Endothelial cell of umbilical vein (primary cell): ENCODE measurements at regions of chr9 and their contacts with region 1.

Region 1: DNA sequence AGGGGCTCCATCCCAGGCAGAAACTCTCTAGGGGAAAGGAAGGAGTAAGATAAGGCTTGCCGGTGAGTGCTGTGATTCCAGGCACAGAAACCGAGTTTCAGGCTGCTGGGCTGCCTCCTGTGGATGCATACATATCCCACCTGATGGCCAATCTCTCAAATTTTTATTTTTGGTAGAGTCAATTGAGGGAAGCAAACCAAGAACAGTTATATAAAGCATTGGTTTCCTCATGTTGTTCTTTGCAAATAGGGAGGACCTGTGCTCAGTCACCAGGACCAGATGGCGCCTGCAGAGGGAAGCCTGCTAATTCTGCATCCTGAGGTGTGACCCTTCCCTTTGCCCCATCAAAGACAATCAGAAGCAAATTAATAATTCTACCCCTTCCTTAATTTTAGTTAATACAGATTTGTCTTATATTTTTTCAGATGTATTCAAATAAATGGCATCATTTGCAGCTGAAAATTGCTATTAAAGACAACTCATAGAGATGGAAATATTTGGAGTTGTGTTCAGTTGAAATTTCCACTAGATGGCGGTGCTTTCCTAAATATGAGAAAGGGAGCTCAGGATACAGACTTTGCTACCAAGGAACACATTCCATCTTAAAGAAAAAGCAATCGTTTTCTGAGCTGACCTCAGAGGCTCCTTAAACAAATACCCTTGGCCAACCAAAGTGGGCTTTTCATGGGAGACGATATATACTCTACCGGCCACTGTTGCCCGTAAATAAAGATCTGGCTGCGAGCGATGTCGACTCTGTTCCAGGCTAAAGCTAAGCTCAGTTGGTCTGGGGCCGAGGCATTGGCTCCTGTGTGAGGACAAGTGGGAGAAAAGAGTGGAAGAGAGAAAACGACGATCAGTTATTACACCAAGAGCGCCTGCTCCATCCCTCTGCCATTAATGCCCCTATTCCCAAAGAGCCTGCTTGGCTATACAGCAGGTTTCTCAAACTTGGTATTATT is 225.7 kb upstream of the KLF9 start:
- DNase-seq: peak; percentile 62
- H3K4me3 ChIP-seq: no peak overlapping the region
- H3K27ac ChIP-seq: no peak overlapping the region
- H3K4me1 ChIP-seq: peaks cover 5% of the 10 kb centered on the region
- H3K27me3 ChIP-seq: peaks cover 0 to 2% of the 10 kb centered on the region in 2 experiments
- CTCF ChIP-seq: peak; percentile 51
- POLR2A ChIP-seq: no peak

Region 2: DNA sequence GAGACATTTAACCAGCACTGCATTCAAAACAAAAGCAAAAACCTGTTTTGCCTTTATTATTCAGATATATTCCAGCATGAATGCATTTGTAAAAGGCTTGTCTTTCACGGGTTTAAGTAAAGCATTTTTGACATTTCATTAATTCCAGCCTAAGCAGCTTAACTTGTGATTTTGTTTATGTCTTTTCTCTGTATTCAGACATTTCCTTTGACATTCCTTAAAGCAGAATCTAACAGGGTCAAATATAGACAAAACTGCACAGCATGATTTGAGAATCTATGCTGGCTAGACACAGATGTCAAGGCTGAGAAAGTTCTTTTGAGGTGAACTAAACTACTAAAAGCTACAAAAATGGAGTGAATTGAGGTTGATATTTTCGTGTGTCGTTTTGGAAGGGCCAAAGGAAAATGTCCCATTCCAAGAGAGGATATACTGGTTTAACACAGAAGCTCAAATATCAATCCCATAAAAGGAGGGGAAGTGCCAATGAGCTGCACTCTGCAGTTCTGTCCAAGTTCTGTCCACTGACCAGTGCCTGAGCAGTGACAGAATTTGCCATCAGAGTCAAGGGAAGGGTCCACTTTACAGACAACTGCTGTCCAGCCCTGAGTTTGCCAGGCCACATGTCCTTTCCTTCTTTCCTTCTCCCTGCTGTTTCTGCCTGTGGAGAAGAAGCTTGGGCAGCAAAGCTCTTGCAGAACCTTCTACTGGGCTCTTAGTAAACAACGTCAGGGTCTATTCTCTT is 26.9 kb before region 1 on chr9:
- CTCF ChIA-PET with region 1: no interaction called
- POLR2A ChIA-PET with region 1: no interaction called
- dilution Hi-C with region 1: no loop called
- intact Hi-C with region 1: no loop called
- DNase-seq: no peak
- H3K4me3 ChIP-seq: no peak overlapping the region
- H3K27ac ChIP-seq: no peak overlapping the region
- H3K4me1 ChIP-seq: no peaks in the 10 kb centered on the region
- H3K27me3 ChIP-seq: peaks cover 4 to 8% of the 10 kb centered on the region in 2 experiments
- CTCF ChIP-seq: no peak
- POLR2A ChIP-seq: no peak

Region 3: DNA sequence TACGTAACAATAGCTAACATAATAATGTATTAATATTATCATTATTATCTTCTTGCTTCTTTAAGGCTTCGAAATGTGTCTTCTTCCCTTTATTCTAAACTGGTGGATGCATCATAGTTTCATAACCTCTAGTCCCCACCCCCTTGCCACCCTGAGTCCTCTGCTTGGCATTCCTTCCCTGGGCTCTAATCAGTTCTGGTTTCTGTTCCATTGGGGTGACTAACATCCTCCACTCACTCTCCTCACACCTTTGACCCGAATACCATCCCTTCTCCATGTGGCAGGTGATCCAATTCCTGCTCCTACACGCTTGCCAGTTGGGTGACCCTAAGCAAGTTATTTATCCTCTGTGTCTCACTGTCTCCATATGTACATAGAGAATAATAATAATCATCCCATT is 195.2 kb after region 1 on chr9:
- CTCF ChIA-PET with region 1: no interaction called
- POLR2A ChIA-PET with region 1: no interaction called
- dilution Hi-C with region 1: no loop called
- intact Hi-C with region 1: loop called (anchors 5 kb)
- DNase-seq: no peak
- H3K4me3 ChIP-seq: no peak overlapping the region
- H3K27ac ChIP-seq: no peak overlapping the region
- H3K4me1 ChIP-seq: peaks cover 4% of the 10 kb centered on the region
- H3K27me3 ChIP-seq: no peaks in the 10 kb centered on the region
- CTCF ChIP-seq: no peak
- POLR2A ChIP-seq: no peak

Region 4: GRCh38 chr9:71001780-71002386 is 361.7 kb after region 1 on chr9:
- CTCF ChIA-PET with region 1: interaction called, 114 read pairs
- POLR2A ChIA-PET with region 1: no interaction called
- dilution Hi-C with region 1: no loop called
- intact Hi-C with region 1: loop called (anchors 1 kb)
- DNase-seq: peak; percentile 26
- H3K4me3 ChIP-seq: no peak overlapping the region
- H3K27ac ChIP-seq: no peak overlapping the region
- H3K4me1 ChIP-seq: no peaks in the 10 kb centered on the region
- H3K27me3 ChIP-seq: no peaks in the 10 kb centered on the region
- CTCF ChIP-seq: peak; percentile 26 to 51
- POLR2A ChIP-seq: no peak

Region 5: DNA sequence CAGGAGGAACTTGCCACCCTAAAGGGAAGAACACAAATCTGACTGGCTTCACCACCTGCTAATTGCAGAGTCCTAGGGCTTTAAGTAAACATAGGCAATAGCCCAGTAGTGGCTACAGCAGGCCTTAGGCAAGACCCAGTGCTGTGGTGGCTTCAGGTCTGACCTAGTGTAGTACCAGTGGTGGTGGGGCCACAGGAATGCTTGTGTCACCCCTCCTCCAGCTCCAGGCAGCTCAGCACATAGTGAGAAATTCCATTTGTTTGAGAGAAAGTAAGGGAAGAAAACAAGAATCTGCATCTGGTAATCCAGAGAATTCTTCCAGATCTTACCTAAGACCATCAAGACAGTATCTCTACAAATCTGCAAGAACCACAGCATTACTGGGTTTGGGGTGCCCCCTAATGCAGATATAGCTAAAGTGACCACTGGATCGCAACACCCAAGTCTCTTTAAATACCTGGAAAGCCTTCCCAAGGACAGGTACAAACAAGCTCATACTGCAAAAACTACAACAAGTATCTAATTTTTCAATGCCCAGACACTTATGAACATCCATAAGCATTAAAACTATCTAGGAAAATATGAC is 583.9 kb after region 1 on chr9:
- CTCF ChIA-PET with region 1: interaction called, 29 read pairs
- POLR2A ChIA-PET with region 1: no interaction called
- dilution Hi-C with region 1: no loop called
- intact Hi-C with region 1: loop called (anchors 1 kb)
- DNase-seq: peak; percentile 25
- H3K4me3 ChIP-seq: no peak overlapping the region
- H3K27ac ChIP-seq: no peak overlapping the region
- H3K4me1 ChIP-seq: no peaks in the 10 kb centered on the region
- H3K27me3 ChIP-seq: no peaks in the 10 kb centered on the region
- CTCF ChIP-seq: no peak
- POLR2A ChIP-seq: no peak

Region 6: DNA sequence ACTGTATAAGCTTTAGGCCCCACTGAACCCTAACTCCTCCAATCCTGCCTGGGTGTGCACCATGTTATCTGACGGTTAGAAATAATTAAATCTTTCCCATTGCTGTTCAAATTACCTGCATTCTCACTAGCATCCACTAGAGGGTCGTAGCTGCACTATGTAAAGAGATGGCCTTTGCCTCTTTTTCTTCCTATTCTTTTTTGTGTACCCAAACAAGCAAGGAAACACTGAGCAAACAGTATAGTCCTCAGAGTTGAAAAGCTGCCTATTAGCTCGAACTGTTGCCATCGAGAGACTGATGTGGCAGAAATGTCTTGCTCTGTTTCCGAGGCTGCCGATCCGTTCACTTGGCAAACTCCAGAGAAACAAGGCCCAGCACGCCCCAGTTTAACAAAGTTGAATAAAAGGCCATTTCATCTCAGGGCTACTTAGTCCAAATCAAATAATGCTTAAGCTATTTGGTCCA is 645.1 kb after region 1 on chr9:
- CTCF ChIA-PET with region 1: interaction called, 27 read pairs
- POLR2A ChIA-PET with region 1: no interaction called
- dilution Hi-C with region 1: no loop called
- intact Hi-C with region 1: no loop called
- DNase-seq: peak; percentile 73
- H3K4me3 ChIP-seq: no peak overlapping the region
- H3K27ac ChIP-seq: no peak overlapping the region
- H3K4me1 ChIP-seq: no peaks in the 10 kb centered on the region
- H3K27me3 ChIP-seq: no peaks in the 10 kb centered on the region
- CTCF ChIP-seq: peak; percentile 70 to 73
- POLR2A ChIP-seq: no peak

Region 7: DNA sequence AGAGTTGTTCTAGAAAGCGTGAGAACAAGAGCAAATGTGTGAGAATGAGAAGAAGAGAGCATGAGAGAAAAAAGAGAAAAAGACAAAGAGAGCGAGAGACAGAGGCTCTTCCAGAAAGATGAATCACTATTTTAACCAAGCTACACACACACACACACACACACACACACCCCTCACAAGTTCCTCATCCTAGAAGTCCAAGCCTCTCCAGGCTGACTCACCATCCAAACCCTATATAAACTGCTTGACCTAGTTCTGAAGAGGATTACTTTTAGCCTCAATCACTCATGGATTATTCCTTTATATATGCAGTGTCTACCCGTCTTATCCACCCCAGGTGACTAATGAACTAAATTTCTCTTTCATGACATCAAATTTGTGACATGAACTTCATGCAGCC is 1382.7 kb after region 1 on chr9:
- CTCF ChIA-PET with region 1: interaction called, 11 read pairs
- POLR2A ChIA-PET with region 1: no interaction called
- dilution Hi-C with region 1: no loop called
- intact Hi-C with region 1: loop called (anchors 2 kb)
- DNase-seq: no peak
- H3K4me3 ChIP-seq: no peak overlapping the region
- H3K27ac ChIP-seq: no peak overlapping the region
- H3K4me1 ChIP-seq: no peaks in the 10 kb centered on the region
- H3K27me3 ChIP-seq: no peaks in the 10 kb centered on the region
- CTCF ChIP-seq: no peak
- POLR2A ChIP-seq: no peak